Heart left ventricle (tissue), 16 donors: ENCODE measurements at regions of chr1 and their contacts with region 1.

Region 1: GRCh38 chr1:46983830-46984586 is 39.5 kb upstream of the CYP4X1 start:
- DNase-seq: no peak
- ATAC-seq: no peak
- H3K4me3 ChIP-seq: no peak overlapping the region
- H3K27ac ChIP-seq: no peak overlapping the region
- H3K4me1 ChIP-seq: no peaks in the 10 kb centered on the region
- H3K27me3 ChIP-seq: no peaks in the 10 kb centered on the region
- CTCF ChIP-seq: no peak
- POLR2A ChIP-seq: no peak

Region 2: GRCh38 chr1:46742069-46742468 is 241.9 kb before region 1 on chr1:
- intact Hi-C with region 1: loop called in 1 of 10 experiments (anchors 5 kb)
- DNase-seq: no peak
- ATAC-seq: no peak
- H3K4me3 ChIP-seq: no peak overlapping the region
- H3K27ac ChIP-seq: no peak overlapping the region
- H3K4me1 ChIP-seq: no peaks in the 10 kb centered on the region
- H3K27me3 ChIP-seq: peaks cover 0 to 24% (median 0%) of the 10 kb centered on the region in 9 donors
- CTCF ChIP-seq: no peak
- POLR2A ChIP-seq: no peak

Region 3: DNA sequence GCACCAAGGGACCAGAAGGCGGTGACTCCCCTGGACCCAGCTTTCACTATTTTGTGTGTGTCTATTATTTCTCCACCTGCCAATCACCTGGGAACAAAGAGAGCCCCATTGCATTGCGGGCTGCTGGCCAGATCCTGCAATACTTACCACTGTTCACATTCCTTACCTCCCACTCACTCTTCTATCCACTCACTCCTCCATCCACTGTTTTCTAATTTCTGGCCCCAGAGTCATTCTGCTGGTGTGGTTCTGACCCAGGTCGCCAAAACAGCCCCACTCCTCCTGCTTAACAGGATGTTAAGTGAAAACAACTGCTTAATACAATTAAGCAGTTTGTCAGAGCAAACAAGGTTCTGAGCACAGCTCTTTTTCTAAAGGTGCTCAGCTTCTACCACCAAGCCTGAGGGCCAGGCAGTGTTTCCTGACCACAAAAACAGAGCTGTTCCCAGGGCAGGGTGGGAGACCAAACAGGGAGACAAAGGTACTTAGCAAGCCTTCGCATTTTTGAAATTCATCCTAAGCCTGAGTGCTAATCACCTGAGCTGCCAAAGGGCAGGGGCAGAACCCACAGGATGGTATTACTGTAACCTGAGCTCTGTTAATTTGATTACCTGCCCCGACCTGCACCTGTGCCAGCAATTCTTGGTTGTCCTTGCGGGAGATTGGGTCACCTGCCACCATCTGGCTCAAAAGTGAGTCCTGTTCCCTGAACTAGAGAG is 226.6 kb before region 1 on chr1:
- intact Hi-C with region 1: no loop called
- DNase-seq: no peak
- ATAC-seq: no peak
- H3K4me3 ChIP-seq: no peak overlapping the region
- H3K27ac ChIP-seq: no peak overlapping the region
- H3K4me1 ChIP-seq: no peaks in the 10 kb centered on the region
- H3K27me3 ChIP-seq: peaks cover 0 to 6% (median 0%) of the 10 kb centered on the region in 9 donors
- CTCF ChIP-seq: no peak
- POLR2A ChIP-seq: no peak

Region 4: GRCh38 chr1:47164552-47164951 is 180.5 kb after region 1 on chr1:
- intact Hi-C with region 1: no loop called
- DNase-seq: no peak
- ATAC-seq: no peak
- H3K4me3 ChIP-seq: no peak overlapping the region
- H3K27ac ChIP-seq: no peak overlapping the region
- H3K4me1 ChIP-seq: no peaks in the 10 kb centered on the region
- H3K27me3 ChIP-seq: peaks cover 0 to 10% (median 0%) of the 10 kb centered on the region in 9 donors
- CTCF ChIP-seq: no peak
- POLR2A ChIP-seq: no peak